Activated CD4-positive, alpha-beta T cell treated with anti-CD3 and anti-CD28 coated beads, Interleukin-2, amount 10 ng/mL, durations not matched to agents 24 days and 14 days (primary cell): ENCODE measurements at regions of chr16 and their contacts with region 1.

Region 1: GRCh38 chr16:19389246-19389645 is 28.4 kb upstream of the TMC5 start:
- DNase-seq: peak; percentile 87
- H3K4me3 Mint-ChIP-seq: no peak overlapping the region
- H3K27ac Mint-ChIP-seq: no peak overlapping the region
- H3K4me1 Mint-ChIP-seq: peaks cover 12% of the 10 kb centered on the region
- H3K27me3 Mint-ChIP-seq: peaks cover 41% of the 10 kb centered on the region

Region 2: DNA sequence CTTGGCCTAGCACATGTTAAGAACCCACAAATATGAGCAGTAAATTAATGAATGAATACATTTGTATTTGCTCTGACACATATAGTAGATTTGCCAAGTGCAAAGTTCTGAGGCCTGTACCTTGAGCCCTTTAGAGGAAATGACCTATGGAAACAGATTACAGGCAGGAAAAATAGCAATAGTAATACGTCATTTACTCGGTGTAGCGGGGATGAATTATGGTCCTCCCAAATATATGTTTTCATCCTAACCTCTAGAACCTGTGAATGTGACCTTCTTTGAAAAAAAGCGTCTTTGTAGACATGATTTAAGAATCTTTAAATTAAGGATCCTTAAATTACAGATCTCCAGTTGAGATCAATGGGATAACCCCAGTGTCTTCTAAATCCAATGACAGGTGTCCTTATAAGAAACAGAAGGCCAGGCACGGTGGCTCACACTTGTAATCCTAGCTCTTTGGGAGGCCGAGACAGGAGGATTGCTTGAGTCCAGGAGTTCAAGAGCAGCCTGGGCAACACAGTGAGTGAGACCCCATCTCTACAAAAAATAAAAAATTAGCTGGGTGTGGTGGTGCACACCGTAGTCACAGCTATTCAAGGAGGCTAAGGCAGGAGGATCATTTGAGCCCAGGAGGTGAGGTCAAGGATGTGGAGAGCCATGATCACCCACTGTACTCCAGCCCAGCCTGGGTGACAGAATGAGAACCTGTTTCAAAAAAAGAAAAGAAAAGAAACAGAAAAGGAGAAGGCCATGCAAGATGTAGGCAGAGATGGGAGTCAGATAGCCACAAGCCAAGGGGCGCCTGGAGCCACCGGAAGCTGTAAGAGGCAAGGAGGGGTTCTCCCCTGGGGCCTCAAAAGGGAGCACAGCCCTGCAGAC is 280.6 kb before region 1 on chr16:
- intact Hi-C with region 1: no loop called
- DNase-seq: no peak
- H3K4me3 Mint-ChIP-seq: no peak overlapping the region
- H3K27ac Mint-ChIP-seq: peak overlapping the region; percentile 46
- H3K4me1 Mint-ChIP-seq: peaks cover 30% of the 10 kb centered on the region
- H3K27me3 Mint-ChIP-seq: peaks cover 13% of the 10 kb centered on the region

Region 3: GRCh38 chr16:19400697-19401096 is 11.5 kb after region 1 on chr16:
- intact Hi-C with region 1: no loop called
- DNase-seq: no peak
- H3K4me3 Mint-ChIP-seq: no peak overlapping the region
- H3K27ac Mint-ChIP-seq: no peak overlapping the region
- H3K4me1 Mint-ChIP-seq: no peaks in the 10 kb centered on the region
- H3K27me3 Mint-ChIP-seq: peaks cover 27% of the 10 kb centered on the region

Region 4: DNA sequence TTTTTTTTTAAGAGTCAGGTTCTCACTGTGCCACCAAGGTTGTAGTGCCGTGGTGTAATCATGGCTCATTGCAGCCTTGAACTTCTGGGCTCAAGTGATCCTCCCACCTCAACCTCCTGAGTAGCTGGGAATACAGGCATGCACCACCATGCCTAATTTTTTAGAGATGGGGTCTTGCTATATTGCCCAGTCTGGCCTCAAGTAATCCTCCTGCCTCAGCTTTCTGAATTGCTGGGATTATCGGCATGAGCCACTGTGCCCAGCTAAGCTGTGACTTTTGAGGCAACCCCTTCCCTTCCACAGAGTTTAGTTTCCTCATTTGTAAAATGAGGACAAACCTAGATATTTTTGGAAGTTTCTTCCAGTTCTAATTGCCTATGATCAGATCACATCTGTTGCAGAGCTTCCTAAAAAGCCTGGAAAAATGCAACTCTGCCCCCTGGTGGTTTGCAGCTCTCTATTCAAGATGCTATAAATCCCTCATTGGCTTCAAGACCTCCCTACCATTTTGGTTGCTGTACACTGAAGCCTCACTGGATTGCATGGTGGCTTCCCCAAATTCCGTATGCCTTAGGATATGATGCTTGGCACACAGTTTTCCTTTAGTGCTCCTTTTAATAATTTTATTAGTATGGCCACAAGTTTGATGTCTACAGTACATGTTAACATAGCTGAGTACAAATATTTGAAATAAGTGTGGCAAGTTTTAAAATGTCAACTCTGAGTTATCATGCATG is 113.3 kb after region 1 on chr16:
- intact Hi-C with region 1: loop called (anchors 1 kb)
- DNase-seq: peak; percentile 89
- H3K4me3 Mint-ChIP-seq: no peak overlapping the region
- H3K27ac Mint-ChIP-seq: no peak overlapping the region
- H3K4me1 Mint-ChIP-seq: no peaks in the 10 kb centered on the region
- H3K27me3 Mint-ChIP-seq: no peaks in the 10 kb centered on the region